Activated CD4-positive, alpha-beta memory T cell treated with anti-CD3 and anti-CD28 coated beads for 36 hours (primary cell): ENCODE measurements at regions of chr11 and their contacts with region 1.

Region 1: DNA sequence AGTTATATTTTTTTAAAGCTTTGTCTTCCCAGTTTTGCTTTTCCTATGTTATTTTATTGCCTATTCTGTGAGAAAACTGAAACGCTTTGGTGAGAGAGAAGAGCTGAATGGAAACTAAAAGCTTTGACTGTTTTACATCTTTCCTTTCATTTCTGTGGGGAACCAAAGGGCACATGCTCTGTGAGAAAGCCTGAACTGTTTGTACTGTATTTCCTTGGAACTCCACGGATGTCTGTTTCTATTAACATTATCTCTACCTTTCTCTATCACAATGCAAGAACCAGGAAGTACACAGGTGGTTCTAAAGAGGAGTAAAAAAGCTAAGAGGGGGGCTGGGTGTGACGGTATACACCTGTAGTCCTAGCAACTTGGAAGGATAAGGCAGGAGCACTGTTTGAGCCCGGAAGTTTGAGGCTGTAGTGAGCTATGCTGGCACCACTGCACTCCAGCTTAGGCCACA is 43.8 kb downstream of the CELF1 start:
- DNase-seq: peak; percentile 14
- H3K4me3 Mint-ChIP-seq: peak overlapping the region; percentile 49
- H3K27ac Mint-ChIP-seq: peak overlapping the region; percentile 94
- H3K4me1 Mint-ChIP-seq: peaks cover 80% of the 10 kb centered on the region
- H3K27me3 Mint-ChIP-seq: no peaks in the 10 kb centered on the region

Region 2: DNA sequence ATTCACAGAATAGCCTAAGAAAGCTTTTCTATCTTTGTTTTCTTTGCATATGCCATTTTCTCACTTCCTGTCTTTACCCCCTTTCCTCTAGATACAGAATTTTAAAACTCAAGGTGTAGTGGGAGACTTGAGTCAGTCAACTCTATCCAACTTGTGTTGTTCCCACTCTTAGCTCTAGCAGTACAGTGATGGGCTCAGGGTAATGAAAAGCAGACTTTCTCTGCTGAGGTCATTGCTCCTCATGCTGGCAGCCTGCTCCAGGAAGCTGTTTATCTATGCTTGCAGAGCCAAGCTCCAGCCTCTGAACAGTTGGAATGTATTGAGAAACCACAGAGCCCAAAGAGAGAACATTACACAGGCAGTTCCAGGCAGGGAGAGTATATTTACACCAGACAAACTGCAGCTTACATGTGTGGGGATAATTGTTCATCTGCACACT is 504.5 kb before region 1 on chr11:
- CTCF ChIA-PET with region 1: no interaction called
- POLR2A ChIA-PET with region 1: no interaction called
- intact Hi-C with region 1: no loop called
- DNase-seq: no peak
- H3K4me3 Mint-ChIP-seq: no peak overlapping the region
- H3K27ac Mint-ChIP-seq: no peak overlapping the region
- H3K4me1 Mint-ChIP-seq: peaks cover 21% of the 10 kb centered on the region
- H3K27me3 Mint-ChIP-seq: no peaks in the 10 kb centered on the region

Region 3: DNA sequence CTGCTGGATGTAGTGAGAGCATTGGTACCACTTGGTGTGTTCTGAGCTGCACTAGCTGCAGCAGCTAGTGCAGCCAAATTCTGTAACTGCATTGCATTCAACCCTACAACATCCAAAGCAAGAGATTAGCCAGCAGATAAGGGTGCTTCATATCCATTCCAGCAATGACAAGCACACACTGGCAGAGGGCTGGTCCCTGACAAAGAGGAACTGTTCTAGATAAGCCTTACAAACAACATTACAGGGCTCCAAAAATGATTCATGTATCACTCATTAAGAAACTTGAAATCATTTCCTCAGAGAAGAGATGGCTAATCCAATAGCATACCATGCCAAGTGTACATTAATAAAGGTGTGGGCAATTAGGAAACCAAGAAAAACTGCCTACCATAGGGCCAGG is 31.8 kb before region 1 on chr11:
- CTCF ChIA-PET with region 1: interaction called, 4 read pairs
- POLR2A ChIA-PET with region 1: no interaction called
- intact Hi-C with region 1: loop called (anchors 1 kb)
- DNase-seq: peak; percentile 61
- H3K4me3 Mint-ChIP-seq: no peak overlapping the region
- H3K27ac Mint-ChIP-seq: peak overlapping the region; percentile 78
- H3K4me1 Mint-ChIP-seq: peaks cover 17% of the 10 kb centered on the region
- H3K27me3 Mint-ChIP-seq: no peaks in the 10 kb centered on the region

Region 4: GRCh38 chr11:47523468-47524225 is 14.5 kb after region 1 on chr11:
- CTCF ChIA-PET with region 1: interaction called, 6 read pairs
- POLR2A ChIA-PET with region 1: interaction called, 5 read pairs
- intact Hi-C with region 1: loop called (anchors 2 kb)
- DNase-seq: peak; percentile 66
- H3K4me3 Mint-ChIP-seq: peak overlapping the region; percentile 40
- H3K27ac Mint-ChIP-seq: peak overlapping the region; percentile 91
- H3K4me1 Mint-ChIP-seq: peaks cover 72% of the 10 kb centered on the region
- H3K27me3 Mint-ChIP-seq: no peaks in the 10 kb centered on the region

Region 5: GRCh38 chr11:47538741-47539574 is 29.9 kb after region 1 on chr11:
- CTCF ChIA-PET with region 1: interaction called, 5 read pairs
- POLR2A ChIA-PET with region 1: interaction called, 17 read pairs
- intact Hi-C with region 1: no loop called
- DNase-seq: no peak
- H3K4me3 Mint-ChIP-seq: no peak overlapping the region
- H3K27ac Mint-ChIP-seq: peak overlapping the region; percentile 87
- H3K4me1 Mint-ChIP-seq: peaks cover 65% of the 10 kb centered on the region
- H3K27me3 Mint-ChIP-seq: no peaks in the 10 kb centered on the region

Region 6: GRCh38 chr11:48161951-48162884 is 653.1 kb after region 1 on chr11:
- CTCF ChIA-PET with region 1: no interaction called
- POLR2A ChIA-PET with region 1: no interaction called
- intact Hi-C with region 1: no loop called
- DNase-seq: no peak
- H3K4me3 Mint-ChIP-seq: no peak overlapping the region
- H3K27ac Mint-ChIP-seq: peak overlapping the region; percentile 25
- H3K4me1 Mint-ChIP-seq: no peaks in the 10 kb centered on the region
- H3K27me3 Mint-ChIP-seq: no peaks in the 10 kb centered on the region